Activated T-helper 2 cell treated with anti-CD3 and anti-CD28 coated beads, Interferon-gamma antibody, Interleukin-2, Interleukin-4, amounts not matched to agents 10 μg/mL and 5 μg/mL and 100 μg/mL, durations not matched to agents 14 hours and 24 hours and 36 hours (primary cell): ENCODE measurements at regions of chrX and their contacts with region 1.

Region 1: DNA sequence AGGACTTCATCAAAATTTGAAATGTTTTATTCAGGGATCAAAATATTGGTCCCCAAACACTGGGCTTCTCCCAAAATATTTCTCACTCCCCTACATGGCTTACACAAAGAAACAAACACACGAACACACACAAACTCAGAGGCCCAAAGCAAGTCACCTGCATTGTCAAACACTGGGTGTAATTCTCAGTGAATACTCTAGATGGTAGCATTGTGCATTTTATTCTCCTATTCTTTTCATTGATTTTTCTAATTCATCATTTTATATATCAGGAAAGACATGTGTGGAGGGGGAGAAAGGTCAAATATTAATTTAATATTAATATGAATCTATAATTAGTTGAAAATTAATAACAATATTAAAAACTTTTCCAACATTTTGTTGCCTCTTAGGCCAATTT is 72.3 kb upstream of the TNMD start:
- DNase-seq: no peak
- H3K4me3 Mint-ChIP-seq: no peak overlapping the region
- H3K27ac Mint-ChIP-seq: no peak overlapping the region
- H3K4me1 Mint-ChIP-seq: no peaks in the 10 kb centered on the region
- H3K27me3 Mint-ChIP-seq: peaks cover 1% of the 10 kb centered on the region

Region 2: DNA sequence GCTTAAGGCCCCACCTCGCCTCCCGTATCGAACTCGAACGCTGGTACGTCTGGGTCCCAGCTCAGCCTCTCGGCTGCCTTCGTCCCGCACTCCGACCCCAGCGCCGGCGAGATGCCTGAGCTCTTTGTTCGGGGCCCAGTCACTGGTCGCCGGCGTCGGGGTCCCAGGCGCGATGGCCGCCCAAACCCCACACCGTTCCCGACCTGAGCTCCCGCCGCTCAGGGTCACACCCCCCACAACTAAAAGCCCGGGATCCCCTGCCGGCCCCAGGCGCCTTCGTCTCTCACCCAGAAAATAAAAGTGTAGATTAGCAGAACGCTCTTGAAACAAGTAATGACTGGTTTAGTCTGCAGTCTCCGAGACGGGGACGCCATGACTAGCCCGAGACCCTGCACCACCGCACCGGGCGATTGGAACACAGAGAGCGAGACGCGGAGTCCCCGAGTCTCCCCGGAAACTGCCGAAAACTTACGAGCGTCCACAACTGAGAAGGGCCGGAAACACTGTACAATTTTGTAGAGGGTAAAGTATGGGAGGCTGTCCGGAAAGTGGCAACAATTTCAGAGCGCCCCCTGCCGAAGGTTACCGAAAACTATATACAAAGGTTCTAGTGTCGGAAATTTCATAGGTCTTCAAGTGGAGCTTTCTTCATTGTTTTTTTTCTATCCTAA is 124.0 kb after region 1 on chrX and contains the start of gene TSPAN6:
- intact Hi-C with region 1: loop called (anchors 2 kb)
- DNase-seq: peak; percentile 43
- H3K4me3 Mint-ChIP-seq: peak within 1 kb of the TSS; percentile 84
- H3K27ac Mint-ChIP-seq: no peak within 1 kb of the TSS
- H3K4me1 Mint-ChIP-seq: peaks cover 4% of the 10 kb centered on the region
- H3K27me3 Mint-ChIP-seq: peaks cover 33% of the 10 kb centered on the region
- total RNA-seq, gene TSPAN6: not detected in 2 replicates

Region 3: GRCh38 chrX:100768679-100769338 is 256.3 kb after region 1 on chrX:
- intact Hi-C with region 1: loop called (anchors 2 kb)
- DNase-seq: peak; percentile 63
- H3K4me3 Mint-ChIP-seq: no peak overlapping the region
- H3K27ac Mint-ChIP-seq: no peak overlapping the region
- H3K4me1 Mint-ChIP-seq: no peaks in the 10 kb centered on the region
- H3K27me3 Mint-ChIP-seq: peaks cover 20% of the 10 kb centered on the region